T-cell (primary cell): ENCODE measurements at regions of chr13 and their contacts with region 1.

Region 1: DNA sequence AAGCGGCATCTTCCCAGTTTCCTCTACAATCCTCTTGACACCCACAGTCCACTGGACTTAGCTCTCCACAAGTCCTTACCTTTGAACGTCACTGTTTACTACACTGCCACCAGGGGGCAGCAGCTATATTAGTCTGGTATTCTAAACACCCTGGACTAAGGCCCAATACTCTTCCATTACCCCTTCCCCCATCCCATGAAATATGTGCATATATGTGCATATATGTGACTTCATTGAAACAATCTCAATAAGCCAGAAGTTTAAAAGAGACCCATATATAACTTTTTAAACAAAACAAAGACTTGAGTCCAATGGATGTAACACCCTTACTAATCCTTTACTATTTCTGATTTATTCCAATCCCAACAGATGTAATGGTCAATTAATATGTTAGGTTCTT is 15.5 kb downstream of the GGACT start:
- DNase-seq: peak; percentile 29 to 87 (median 67)
- ATAC-seq: peak; percentile 79 to 89 (median 83)
- H3K4me3 ChIP-seq: no peak overlapping the region
- H3K4me3 Mint-ChIP-seq: no peak overlapping the region
- H3K27ac ChIP-seq: no peak overlapping the region
- H3K27ac Mint-ChIP-seq: no peak overlapping the region
- H3K4me1 ChIP-seq: peaks cover 0 to 2% of the 10 kb centered on the region in 2 experiments
- H3K4me1 Mint-ChIP-seq: peaks cover 13 to 19% (median 16%) of the 10 kb centered on the region in 3 donors
- H3K27me3 ChIP-seq: no peaks in the 10 kb centered on the region
- H3K27me3 Mint-ChIP-seq: no peaks in the 10 kb centered on the region

Region 2: DNA sequence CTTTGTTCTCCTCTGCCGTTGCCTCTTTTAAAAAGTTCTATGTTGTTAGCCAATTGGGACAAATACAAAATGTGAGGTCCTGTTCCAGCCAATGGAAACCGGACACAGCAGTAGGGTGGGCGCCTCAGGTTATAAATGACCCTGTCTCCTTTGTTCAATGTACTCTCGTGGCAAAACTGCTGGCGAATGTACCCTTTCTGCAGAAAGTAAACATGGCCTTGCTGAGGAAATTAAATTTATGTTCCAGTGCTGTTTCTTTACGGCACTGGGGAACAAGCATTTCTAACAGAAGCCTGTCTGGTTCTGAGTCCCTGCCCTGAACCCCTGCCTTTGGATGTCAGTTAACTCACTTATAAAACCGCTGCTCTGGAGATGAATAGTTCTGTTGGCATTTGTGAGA is 343.5 kb before region 1 on chr13:
- CTCF ChIA-PET with region 1: no interaction called
- POLR2A ChIA-PET with region 1: no interaction called
- DNase-seq: no peak
- ATAC-seq: no peak
- H3K4me3 ChIP-seq: no peak overlapping the region
- H3K4me3 Mint-ChIP-seq: no peak overlapping the region
- H3K27ac ChIP-seq: no peak overlapping the region
- H3K27ac Mint-ChIP-seq: no peak overlapping the region
- H3K4me1 ChIP-seq: peaks cover 2 to 3% of the 10 kb centered on the region in 2 experiments
- H3K4me1 Mint-ChIP-seq: peaks cover 0 to 5% (median 0%) of the 10 kb centered on the region in 3 donors
- H3K27me3 ChIP-seq: no peaks in the 10 kb centered on the region
- H3K27me3 Mint-ChIP-seq: no peaks in the 10 kb centered on the region

Region 3: DNA sequence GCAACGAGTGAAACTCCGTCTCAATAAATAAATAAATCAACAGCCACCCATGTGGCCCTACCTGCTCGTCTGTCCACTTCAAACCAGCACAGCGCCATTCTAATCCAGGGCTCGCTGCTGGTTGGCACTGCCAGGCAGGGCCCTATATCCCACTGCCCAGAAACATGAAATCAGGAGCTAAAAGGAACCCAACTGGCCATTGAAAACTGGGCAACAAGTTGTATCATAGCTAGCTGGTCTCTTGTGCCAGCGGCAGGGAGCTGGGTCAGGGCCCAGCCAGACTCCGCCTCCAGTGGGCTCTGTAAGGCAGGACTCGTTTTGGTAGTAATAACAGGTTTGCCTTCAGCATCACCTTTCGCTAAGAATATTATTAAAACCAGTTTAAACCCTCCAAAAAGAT is 23.8 kb before region 1 on chr13:
- CTCF ChIA-PET with region 1: no interaction called
- POLR2A ChIA-PET with region 1: no interaction called
- DNase-seq: no peak
- ATAC-seq: no peak
- H3K4me3 ChIP-seq: no peak overlapping the region
- H3K4me3 Mint-ChIP-seq: no peak overlapping the region
- H3K27ac ChIP-seq: no peak overlapping the region
- H3K27ac Mint-ChIP-seq: no peak overlapping the region
- H3K4me1 ChIP-seq: no peaks in the 10 kb centered on the region
- H3K4me1 Mint-ChIP-seq: no peaks in the 10 kb centered on the region
- H3K27me3 ChIP-seq: no peaks in the 10 kb centered on the region
- H3K27me3 Mint-ChIP-seq: no peaks in the 10 kb centered on the region

Region 4: GRCh38 chr13:100588331-100589177 is 15.4 kb after region 1 on chr13 and contains the start of gene GGACT:
- CTCF ChIA-PET with region 1: interaction called, 28 to 32 read pairs
- POLR2A ChIA-PET with region 1: no interaction called
- DNase-seq: peak; percentile 60 to 90 (median 79)
- ATAC-seq: peak; percentile 88 to 92 (median 90)
- H3K4me3 ChIP-seq: peak within 1 kb of the TSS; percentile 63 to 73
- H3K4me3 Mint-ChIP-seq: peak within 1 kb of the TSS; percentile 76 to 83 (median 81)
- H3K27ac ChIP-seq: peak within 1 kb of the TSS; percentile 78
- H3K27ac Mint-ChIP-seq: peak within 1 kb of the TSS; percentile 94
- H3K4me1 ChIP-seq: peaks cover 13 to 31% of the 10 kb centered on the region in 2 experiments
- H3K4me1 Mint-ChIP-seq: peaks cover 46 to 52% (median 48%) of the 10 kb centered on the region in 3 donors
- H3K27me3 ChIP-seq: no peaks in the 10 kb centered on the region
- H3K27me3 Mint-ChIP-seq: no peaks in the 10 kb centered on the region
- total RNA-seq, gene GGACT: 4.4 to 7.9 (median 6.4) TPM

Region 5: GRCh38 chr13:101127741-101128353 is 554.7 kb after region 1 on chr13:
- CTCF ChIA-PET with region 1: interaction called, 9 to 24 read pairs
- POLR2A ChIA-PET with region 1: no interaction called
- DNase-seq: peak in 11 of 35 experiments; percentile 2 to 61 (median 3)
- ATAC-seq: peak; percentile 46 to 70 (median 57)
- H3K4me3 ChIP-seq: no peak overlapping the region
- H3K4me3 Mint-ChIP-seq: no peak overlapping the region
- H3K27ac ChIP-seq: no peak overlapping the region
- H3K27ac Mint-ChIP-seq: no peak overlapping the region
- H3K4me1 ChIP-seq: no peaks in the 10 kb centered on the region
- H3K4me1 Mint-ChIP-seq: no peaks in the 10 kb centered on the region
- H3K27me3 ChIP-seq: no peaks in the 10 kb centered on the region
- H3K27me3 Mint-ChIP-seq: peaks cover 5 to 11% of the 10 kb centered on the region in 2 donors

Region 6: GRCh38 chr13:101231751-101232428 is 658.8 kb after region 1 on chr13:
- CTCF ChIA-PET with region 1: no interaction called
- POLR2A ChIA-PET with region 1: no interaction called
- DNase-seq: no peak
- ATAC-seq: no peak
- H3K4me3 ChIP-seq: no peak overlapping the region
- H3K4me3 Mint-ChIP-seq: no peak overlapping the region
- H3K27ac ChIP-seq: no peak overlapping the region
- H3K27ac Mint-ChIP-seq: no peak overlapping the region
- H3K4me1 ChIP-seq: no peaks in the 10 kb centered on the region
- H3K4me1 Mint-ChIP-seq: no peaks in the 10 kb centered on the region
- H3K27me3 ChIP-seq: no peaks in the 10 kb centered on the region
- H3K27me3 Mint-ChIP-seq: peaks cover 3 to 8% of the 10 kb centered on the region in 2 donors